Ovary (tissue), 10 donors: ENCODE measurements at regions of chr3 and their contacts with region 1.

Region 1: DNA sequence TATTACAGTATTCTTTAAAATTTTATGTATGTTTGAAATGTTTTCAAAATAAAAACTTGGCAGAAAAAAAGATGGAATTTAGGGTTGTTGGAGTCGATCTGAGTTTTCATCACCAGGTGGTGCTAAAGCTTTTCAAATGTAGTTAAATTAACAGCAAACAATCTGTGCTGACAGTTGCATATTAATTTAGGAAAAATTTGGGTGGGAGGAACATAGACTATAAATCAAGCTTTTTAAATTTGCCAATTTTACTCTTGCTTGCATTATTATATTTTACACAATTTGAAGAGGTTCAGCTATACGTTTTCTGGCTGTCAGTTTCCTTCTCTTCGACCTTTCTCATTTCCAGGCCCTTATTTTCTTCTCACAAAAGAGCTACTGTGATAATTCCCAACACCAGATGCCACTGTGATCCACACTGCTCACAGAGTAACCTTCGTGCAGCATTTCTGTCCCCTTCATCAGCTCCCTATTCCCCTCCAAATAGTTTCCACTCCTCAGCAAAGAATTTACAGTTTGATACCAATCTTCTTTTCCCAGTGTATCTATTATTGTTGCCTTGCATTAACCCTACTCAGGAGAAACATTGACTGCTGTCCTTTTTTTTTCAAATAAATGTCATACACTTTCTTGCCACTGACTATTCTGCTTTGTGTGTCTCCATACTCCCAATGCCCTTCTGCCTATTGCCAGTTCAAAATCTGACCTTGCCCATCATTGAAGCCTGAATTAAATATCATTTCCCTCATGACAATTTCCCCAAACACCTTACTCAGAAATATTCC is 53.4 kb upstream of the EIF5A2 start:
- DNase-seq: no peak
- H3K4me3 ChIP-seq: no peak overlapping the region
- H3K27ac ChIP-seq: no peak overlapping the region
- H3K4me1 ChIP-seq: no peaks in the 10 kb centered on the region
- H3K27me3 ChIP-seq: no peaks in the 10 kb centered on the region
- CTCF ChIP-seq: peak; percentile 34 to 64 (median 44)
- EP300 ChIP-seq: no peak
- POLR2A ChIP-seq: no peak

Region 2: GRCh38 chr3:171561596-171562323 is 600.0 kb after region 1 on chr3:
- intact Hi-C with region 1: loop called (anchors 5 to 10 kb)
- DNase-seq: no peak
- H3K4me3 ChIP-seq: no peak overlapping the region
- H3K27ac ChIP-seq: no peak overlapping the region
- H3K4me1 ChIP-seq: no peaks in the 10 kb centered on the region
- H3K27me3 ChIP-seq: no peaks in the 10 kb centered on the region
- CTCF ChIP-seq: no peak
- EP300 ChIP-seq: no peak
- POLR2A ChIP-seq: no peak